Activated CD4-positive, alpha-beta memory T cell treated with anti-CD3 and anti-CD28 coated beads for 36 hours (primary cell): ENCODE measurements at regions of chr2 and their contacts with region 1.

Region 1: DNA sequence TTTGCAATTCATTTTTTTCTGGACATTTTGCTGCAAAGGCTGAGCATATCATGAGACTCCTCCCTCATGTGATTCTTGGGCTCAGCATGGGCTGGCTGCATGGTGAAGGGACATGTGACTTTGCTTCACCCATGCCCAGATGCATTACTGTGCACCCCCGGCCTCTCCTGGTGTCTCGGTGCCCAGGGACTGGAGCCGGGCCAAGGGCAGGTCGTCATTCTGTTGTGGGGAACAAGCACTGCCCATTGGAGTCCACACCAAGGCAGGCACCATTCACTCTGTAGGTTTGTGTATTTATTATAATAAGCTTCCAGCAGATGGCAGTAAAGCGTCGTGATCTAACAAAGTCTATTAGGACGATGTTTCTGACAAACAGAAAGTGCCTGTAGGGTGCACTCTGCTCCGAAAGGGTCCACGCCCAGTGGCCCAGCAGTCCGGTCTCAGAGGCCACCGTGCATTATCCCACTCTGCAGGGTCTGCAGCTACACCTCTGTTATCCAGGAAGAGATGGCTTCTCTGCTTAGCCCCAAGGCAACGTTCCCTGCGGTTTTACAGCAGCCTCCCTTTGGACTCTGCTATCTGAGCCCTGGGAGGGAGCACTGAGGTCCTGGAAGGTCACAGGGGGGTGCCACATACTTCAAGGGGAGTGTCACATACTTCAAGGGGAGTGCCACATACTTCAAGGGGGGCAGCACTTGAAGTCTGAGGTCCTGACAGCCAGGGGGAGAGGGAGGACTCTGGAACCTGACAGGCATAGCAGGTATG is 219.6 kb downstream of the TSN start:
- DNase-seq: peak; percentile 31
- H3K4me3 Mint-ChIP-seq: no peak overlapping the region
- H3K27ac Mint-ChIP-seq: no peak overlapping the region
- H3K4me1 Mint-ChIP-seq: peaks cover 3% of the 10 kb centered on the region
- H3K27me3 Mint-ChIP-seq: peaks cover 2% of the 10 kb centered on the region

Region 2: GRCh38 chr2:122003196-122003940 is 28.3 kb after region 1 on chr2:
- CTCF ChIA-PET with region 1: no interaction called
- POLR2A ChIA-PET with region 1: no interaction called
- intact Hi-C with region 1: no loop called
- DNase-seq: no peak
- H3K4me3 Mint-ChIP-seq: no peak overlapping the region
- H3K27ac Mint-ChIP-seq: no peak overlapping the region
- H3K4me1 Mint-ChIP-seq: no peaks in the 10 kb centered on the region
- H3K27me3 Mint-ChIP-seq: no peaks in the 10 kb centered on the region

Region 3: GRCh38 chr2:122136056-122136455 is 161.0 kb after region 1 on chr2:
- CTCF ChIA-PET with region 1: no interaction called
- POLR2A ChIA-PET with region 1: no interaction called
- intact Hi-C with region 1: loop called (anchors 1 kb)
- DNase-seq: peak; percentile 26
- H3K4me3 Mint-ChIP-seq: no peak overlapping the region
- H3K27ac Mint-ChIP-seq: no peak overlapping the region
- H3K4me1 Mint-ChIP-seq: no peaks in the 10 kb centered on the region
- H3K27me3 Mint-ChIP-seq: no peaks in the 10 kb centered on the region